ENCODE measurements at regions of chr1 and their contacts with region 1.

Region 1: DNA sequence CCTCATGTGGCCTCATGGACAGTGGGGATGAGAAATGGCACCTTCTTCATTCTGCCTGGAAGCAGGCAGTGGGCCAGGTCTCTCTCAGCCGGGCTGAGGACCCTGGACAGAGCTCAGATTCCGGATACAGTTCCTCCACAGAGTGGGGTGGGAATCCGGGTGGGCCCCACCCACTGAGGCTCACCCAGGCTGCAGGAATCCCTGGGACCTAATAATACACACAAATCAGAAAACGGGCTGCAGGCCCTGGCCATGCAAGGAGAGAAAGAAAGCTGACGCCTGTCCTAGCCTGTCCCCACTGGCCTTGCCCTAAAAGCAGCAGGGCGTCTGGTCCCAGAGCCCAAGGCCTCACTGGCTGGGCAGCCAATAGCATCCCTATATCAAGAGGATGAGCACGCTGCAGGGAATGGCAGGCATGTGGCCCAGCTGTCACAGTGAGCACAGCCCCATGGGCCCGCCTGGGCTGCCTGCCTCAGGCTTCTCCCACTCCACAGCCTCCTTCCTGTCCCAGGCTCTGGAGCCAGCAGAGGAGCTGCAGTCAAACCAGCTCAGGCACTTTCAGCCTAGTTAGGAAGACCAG is 25.3 kb downstream of the ACTA1 start:
- DNase-seq: no peak
- H3K4me3 ChIP-seq: no peak overlapping the region
- CTCF ChIP-seq: no peak

Region 2: DNA sequence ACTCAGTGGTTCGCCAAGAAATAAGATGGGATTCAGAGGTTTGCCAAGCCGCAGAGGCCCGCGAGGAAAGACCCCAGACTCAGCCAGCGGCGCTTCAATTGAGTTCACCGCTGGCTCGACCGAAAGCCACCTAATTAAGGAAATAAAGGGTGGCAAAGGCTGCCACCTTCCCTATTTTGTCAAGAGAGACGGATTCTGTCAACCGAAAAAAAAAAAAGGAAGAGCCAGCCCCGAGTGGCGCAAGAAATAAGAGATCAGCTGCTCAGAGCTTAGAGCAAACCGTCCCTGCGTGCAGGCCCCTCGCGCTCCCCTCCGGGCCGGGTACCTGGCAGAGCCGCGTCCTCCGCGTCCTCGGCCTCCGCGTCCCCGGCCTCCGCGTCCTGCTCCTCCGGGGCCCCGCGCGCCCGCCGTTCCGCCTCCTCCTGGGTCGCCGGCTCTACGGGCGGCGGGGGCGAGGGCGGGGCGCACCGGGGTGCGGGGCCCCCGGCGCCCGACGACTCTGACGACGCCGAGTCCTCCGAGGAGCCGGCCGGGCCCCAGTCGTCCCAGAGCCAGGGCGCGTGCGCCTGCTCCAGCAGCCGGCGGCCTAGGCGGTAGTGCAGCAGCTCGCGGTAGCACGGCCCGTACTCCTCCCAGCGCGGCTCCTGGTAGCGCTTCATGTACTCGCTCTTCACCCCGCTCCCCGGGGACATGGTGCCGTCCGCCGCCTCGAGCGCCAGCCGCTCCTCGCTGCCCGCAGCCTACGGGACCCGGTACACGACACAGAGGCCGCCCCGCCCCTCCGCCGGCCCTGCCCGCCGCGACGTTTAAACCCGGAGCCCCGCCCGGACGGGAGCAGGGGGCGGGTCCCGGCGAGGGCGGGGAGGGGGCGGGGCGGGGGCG is 66.5 kb before region 1 on chr1:
- in situ Hi-C with region 1: loop called (anchors 5 kb)
- DNase-seq: peak; percentile 6
- H3K4me3 ChIP-seq: peak overlapping the region; percentile 74
- CTCF ChIP-seq: no peak

Measured in astrocyte of the cerebellum (primary cell).